ENCODE measurements at regions of chr17 and their contacts with region 1.

Region 1: GRCh38 chr17:79970576-79971068 is 65.0 kb downstream of the TBC1D16 start:
- DNase-seq: peak in 6 of 9 donors; percentile 30 to 49 (median 41)
- ATAC-seq: peak; percentile 54
- H3K4me3 ChIP-seq: no peak overlapping the region
- H3K4me3 Mint-ChIP-seq: no peak overlapping the region
- H3K27ac ChIP-seq: no peak overlapping the region
- H3K27ac Mint-ChIP-seq: no peak overlapping the region
- H3K4me1 ChIP-seq: no peaks in the 10 kb centered on the region
- H3K4me1 Mint-ChIP-seq: peaks cover 0 to 9% (median 0%) of the 10 kb centered on the region in 7 donors
- H3K27me3 ChIP-seq: no peaks in the 10 kb centered on the region
- H3K27me3 Mint-ChIP-seq: peaks cover 0 to 20% (median 7%) of the 10 kb centered on the region in 5 donors

Region 2: GRCh38 chr17:79789534-79790353 is 180.9 kb before region 1 on chr17:
- CTCF ChIA-PET with region 1: no interaction called
- POLR2A ChIA-PET with region 1: no interaction called
- intact Hi-C with region 1: loop called in 1 of 2 experiments (anchors 5 kb)
- DNase-seq: peak in 1 of 9 donors; percentile 60
- ATAC-seq: peak; percentile 63
- H3K4me3 ChIP-seq: no peak overlapping the region
- H3K4me3 Mint-ChIP-seq: peak overlapping the region in 6 of 10 donors; percentile 13 to 69 (median 32)
- H3K27ac ChIP-seq: no peak overlapping the region
- H3K27ac Mint-ChIP-seq: peak overlapping the region in 1 of 9 donors; percentile 48
- H3K4me1 ChIP-seq: peaks cover 11 to 21% of the 10 kb centered on the region in 2 donors
- H3K4me1 Mint-ChIP-seq: peaks cover 0 to 22% (median 12%) of the 10 kb centered on the region in 7 donors
- H3K27me3 ChIP-seq: peaks cover 6 to 21% of the 10 kb centered on the region in 2 donors
- H3K27me3 Mint-ChIP-seq: peaks cover 40 to 61% (median 58%) of the 10 kb centered on the region in 5 donors

Region 3: DNA sequence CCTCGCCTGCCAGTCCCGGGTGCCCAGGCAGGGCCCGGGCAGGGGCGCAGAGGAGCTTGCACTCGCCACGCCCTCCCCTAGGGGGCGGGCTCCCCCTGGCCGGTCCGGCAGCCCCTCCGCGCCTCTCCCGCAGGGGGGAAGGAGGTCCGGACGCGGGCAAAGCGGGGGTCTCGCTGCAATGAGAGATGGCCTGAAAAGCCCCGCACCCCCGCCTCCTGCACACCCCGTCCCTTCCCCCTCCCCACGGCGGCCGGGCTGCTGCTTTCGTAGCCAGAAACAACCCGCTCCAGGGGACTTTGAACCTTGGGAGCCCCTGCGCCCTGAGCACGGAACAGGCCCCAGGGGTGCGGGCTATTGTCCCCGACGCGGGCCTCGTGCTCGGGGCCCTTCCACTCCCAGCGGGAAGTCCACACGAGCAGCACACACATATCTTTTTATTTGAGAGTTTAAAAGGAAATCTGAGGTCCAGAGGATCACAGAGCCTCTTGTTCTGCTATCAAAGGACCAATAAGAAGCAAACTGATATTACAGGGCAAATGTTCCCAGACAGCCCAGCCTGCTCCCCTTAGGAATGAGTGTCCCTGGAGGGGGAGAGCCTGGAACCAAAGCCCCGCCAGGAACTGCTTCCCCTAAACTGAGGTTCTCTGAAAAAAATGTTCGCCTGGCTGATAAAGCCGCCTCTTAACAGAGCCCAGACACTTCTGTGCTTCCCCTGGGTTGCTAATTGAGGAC is 125.6 kb before region 1 on chr17:
- CTCF ChIA-PET with region 1: no interaction called
- POLR2A ChIA-PET with region 1: no interaction called
- intact Hi-C with region 1: loop called in 1 of 2 experiments (anchors 5 kb)
- DNase-seq: peak in 7 of 9 donors; percentile 28 to 72 (median 42)
- ATAC-seq: peak; percentile 69
- H3K4me3 ChIP-seq: no peak overlapping the region
- H3K4me3 Mint-ChIP-seq: peak overlapping the region in 8 of 10 donors; percentile 12 to 95 (median 40)
- H3K27ac ChIP-seq: no peak overlapping the region
- H3K27ac Mint-ChIP-seq: no peak overlapping the region
- H3K4me1 ChIP-seq: peaks cover 39 to 44% of the 10 kb centered on the region in 2 donors
- H3K4me1 Mint-ChIP-seq: peaks cover 7 to 40% (median 26%) of the 10 kb centered on the region in 7 donors
- H3K27me3 ChIP-seq: peaks cover 15 to 30% of the 10 kb centered on the region in 2 donors
- H3K27me3 Mint-ChIP-seq: peaks cover 13 to 57% (median 29%) of the 10 kb centered on the region in 5 donors

Region 4: GRCh38 chr17:79883202-79883601 is 87.4 kb before region 1 on chr17:
- CTCF ChIA-PET with region 1: no interaction called
- POLR2A ChIA-PET with region 1: no interaction called
- intact Hi-C with region 1: no loop called
- DNase-seq: no peak
- ATAC-seq: no peak
- H3K4me3 ChIP-seq: no peak overlapping the region
- H3K4me3 Mint-ChIP-seq: no peak overlapping the region
- H3K27ac ChIP-seq: no peak overlapping the region
- H3K27ac Mint-ChIP-seq: no peak overlapping the region
- H3K4me1 ChIP-seq: no peaks in the 10 kb centered on the region
- H3K4me1 Mint-ChIP-seq: no peaks in the 10 kb centered on the region
- H3K27me3 ChIP-seq: no peaks in the 10 kb centered on the region
- H3K27me3 Mint-ChIP-seq: peaks cover 6 to 49% (median 25%) of the 10 kb centered on the region in 5 donors

Measured in naive thymus-derived CD4-positive, alpha-beta T cell (primary cell).